CD4-positive, alpha-beta T cell (primary cell): ENCODE measurements at regions of chr4 and their contacts with region 1.

Region 1: DNA sequence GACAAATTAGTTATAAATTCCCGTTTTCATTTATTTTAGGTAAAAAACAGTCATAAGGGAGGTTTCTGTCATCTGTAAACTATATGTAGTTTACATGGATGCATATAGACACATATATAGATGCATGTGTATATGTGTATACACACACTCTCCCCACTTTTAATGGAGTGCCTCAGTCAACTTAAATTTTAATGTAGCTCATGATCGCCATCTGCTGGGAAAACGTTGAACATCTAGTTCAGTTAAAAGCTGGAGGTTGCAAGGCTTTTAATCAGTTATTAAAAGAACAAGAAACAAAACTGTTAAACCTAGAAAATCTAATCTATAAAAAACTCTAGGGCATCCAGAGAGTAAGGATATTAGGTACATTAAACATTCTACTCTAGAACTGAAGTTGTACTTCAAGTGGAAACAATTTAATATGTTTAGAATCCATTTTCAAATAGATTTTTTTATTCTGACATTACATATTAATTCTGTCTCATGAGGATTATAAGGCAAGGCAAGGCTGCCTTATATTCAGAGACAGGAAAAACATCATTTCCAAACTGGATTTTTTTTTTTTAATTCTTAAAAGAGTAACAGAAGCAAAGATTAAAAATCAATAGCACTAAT is 122.6 kb downstream of the SHISA3 start:
- DNase-seq: peak in 11 of 14 experiments; percentile 3 to 65 (median 17)
- ATAC-seq: peak; percentile 52
- H3K4me3 ChIP-seq: no peak overlapping the region
- H3K4me3 Mint-ChIP-seq: no peak overlapping the region
- H3K27ac ChIP-seq: no peak overlapping the region
- H3K27ac Mint-ChIP-seq: no peak overlapping the region
- H3K4me1 ChIP-seq: no peaks in the 10 kb centered on the region
- H3K4me1 Mint-ChIP-seq: no peaks in the 10 kb centered on the region
- H3K27me3 ChIP-seq: no peaks in the 10 kb centered on the region
- H3K27me3 Mint-ChIP-seq: no peaks in the 10 kb centered on the region
- CTCF ChIP-seq: peak; percentile 79

Region 2: DNA sequence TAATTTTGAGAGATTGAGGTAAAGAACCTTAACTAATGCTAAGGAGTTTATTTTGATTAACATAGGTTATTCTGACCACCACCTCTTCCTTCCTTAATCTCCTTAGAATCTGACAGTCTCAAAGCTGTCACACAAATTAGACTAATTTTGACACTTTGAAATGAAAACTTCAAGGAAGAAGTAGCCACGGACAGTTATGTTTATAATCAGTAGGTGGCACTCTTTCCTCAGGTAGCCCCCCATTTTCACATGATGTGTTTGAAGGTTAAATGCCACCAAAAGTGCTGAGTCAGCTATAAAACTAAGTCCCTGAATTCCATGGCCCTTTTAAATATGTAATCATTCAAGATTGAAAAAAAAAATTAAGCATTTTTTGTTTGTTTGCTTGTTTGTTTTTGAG is 562.3 kb before region 1 on chr4:
- CTCF ChIA-PET with region 1: no interaction called
- POLR2A ChIA-PET with region 1: no interaction called
- intact Hi-C with region 1: loop called (anchors 5 to 10 kb)
- DNase-seq: peak in 3 of 14 experiments; percentile 35 to 52 (median 47)
- ATAC-seq: no peak
- H3K4me3 ChIP-seq: no peak overlapping the region
- H3K4me3 Mint-ChIP-seq: no peak overlapping the region
- H3K27ac ChIP-seq: no peak overlapping the region
- H3K27ac Mint-ChIP-seq: no peak overlapping the region
- H3K4me1 ChIP-seq: no peaks in the 10 kb centered on the region
- H3K4me1 Mint-ChIP-seq: no peaks in the 10 kb centered on the region
- H3K27me3 ChIP-seq: no peaks in the 10 kb centered on the region
- H3K27me3 Mint-ChIP-seq: no peaks in the 10 kb centered on the region
- CTCF ChIP-seq: peak; percentile 31

Region 3: GRCh38 chr4:42282081-42282901 is 237.6 kb before region 1 on chr4:
- CTCF ChIA-PET with region 1: no interaction called
- POLR2A ChIA-PET with region 1: no interaction called
- intact Hi-C with region 1: loop called (anchors 5 kb)
- DNase-seq: peak in 3 of 14 experiments; percentile 48 to 58 (median 49)
- ATAC-seq: no peak
- H3K4me3 ChIP-seq: no peak overlapping the region
- H3K4me3 Mint-ChIP-seq: no peak overlapping the region
- H3K27ac ChIP-seq: no peak overlapping the region
- H3K27ac Mint-ChIP-seq: no peak overlapping the region
- H3K4me1 ChIP-seq: peaks cover 2% of the 10 kb centered on the region
- H3K4me1 Mint-ChIP-seq: peaks cover 5% of the 10 kb centered on the region
- H3K27me3 ChIP-seq: peaks cover 6 to 9% of the 10 kb centered on the region in 2 experiments
- H3K27me3 Mint-ChIP-seq: peaks cover 32% of the 10 kb centered on the region
- CTCF ChIP-seq: peak; percentile 44

Region 4: GRCh38 chr4:42371306-42372252 is 148.3 kb before region 1 on chr4:
- CTCF ChIA-PET with region 1: interaction called, 3 read pairs
- POLR2A ChIA-PET with region 1: no interaction called
- intact Hi-C with region 1: loop called in 1 of 2 experiments (anchors 10 kb)
- DNase-seq: peak in 3 of 14 experiments; percentile 17 to 29 (median 27)
- ATAC-seq: no peak
- H3K4me3 ChIP-seq: no peak overlapping the region
- H3K4me3 Mint-ChIP-seq: no peak overlapping the region
- H3K27ac ChIP-seq: no peak overlapping the region
- H3K27ac Mint-ChIP-seq: no peak overlapping the region
- H3K4me1 ChIP-seq: no peaks in the 10 kb centered on the region
- H3K4me1 Mint-ChIP-seq: no peaks in the 10 kb centered on the region
- H3K27me3 ChIP-seq: no peaks in the 10 kb centered on the region
- H3K27me3 Mint-ChIP-seq: peaks cover 9% of the 10 kb centered on the region
- CTCF ChIP-seq: peak; percentile 29